ENCODE measurements at regions of chr1 and their contacts with region 1.

Region 1: DNA sequence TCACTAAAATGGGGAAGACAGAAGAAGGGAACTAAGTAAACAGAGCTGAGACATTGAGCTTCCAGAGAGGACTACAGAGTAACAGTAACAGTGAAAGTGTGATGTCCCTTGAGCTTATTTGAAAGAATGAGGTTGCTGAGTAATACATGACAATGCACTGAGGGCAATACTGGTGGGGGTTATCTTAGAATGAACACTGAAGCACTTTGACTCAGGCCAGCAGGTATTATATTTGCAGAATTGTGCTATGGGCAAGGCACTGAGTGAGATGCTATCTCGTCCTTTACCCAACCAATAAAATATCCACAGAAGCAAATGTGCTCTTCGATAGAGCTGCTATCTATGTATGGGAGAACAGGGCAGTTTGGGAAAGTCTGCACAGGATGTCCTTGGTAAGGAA is 133.2 kb downstream of the DISP1 start:
- DNase-seq: no peak
- H3K4me3 ChIP-seq: no peak overlapping the region
- H3K27ac ChIP-seq: no peak overlapping the region
- H3K4me1 ChIP-seq: no peaks in the 10 kb centered on the region
- H3K27me3 ChIP-seq: no peaks in the 10 kb centered on the region
- CTCF ChIP-seq: no peak
- POLR2A ChIP-seq: no peak

Region 2: GRCh38 chr1:222824641-222825040 is 123.4 kb before region 1 on chr1:
- CTCF ChIA-PET with region 1: no interaction called
- POLR2A ChIA-PET with region 1: no interaction called
- dilution Hi-C with region 1: no loop called
- intact Hi-C with region 1: loop called (anchors 5 kb)
- DNase-seq: no peak
- H3K4me3 ChIP-seq: no peak overlapping the region
- H3K27ac ChIP-seq: no peak overlapping the region
- H3K4me1 ChIP-seq: no peaks in the 10 kb centered on the region
- H3K27me3 ChIP-seq: no peaks in the 10 kb centered on the region
- CTCF ChIP-seq: no peak
- POLR2A ChIP-seq: no peak

Region 3: GRCh38 chr1:222926566-222926965 is 21.5 kb before region 1 on chr1:
- CTCF ChIA-PET with region 1: no interaction called
- POLR2A ChIA-PET with region 1: no interaction called
- dilution Hi-C with region 1: no loop called
- intact Hi-C with region 1: no loop called
- DNase-seq: no peak
- H3K4me3 ChIP-seq: no peak overlapping the region
- H3K27ac ChIP-seq: no peak overlapping the region
- H3K4me1 ChIP-seq: no peaks in the 10 kb centered on the region
- H3K27me3 ChIP-seq: no peaks in the 10 kb centered on the region
- CTCF ChIP-seq: no peak
- POLR2A ChIP-seq: no peak